ENCODE measurements at regions of chr11 and their contacts with region 1.

Region 1: DNA sequence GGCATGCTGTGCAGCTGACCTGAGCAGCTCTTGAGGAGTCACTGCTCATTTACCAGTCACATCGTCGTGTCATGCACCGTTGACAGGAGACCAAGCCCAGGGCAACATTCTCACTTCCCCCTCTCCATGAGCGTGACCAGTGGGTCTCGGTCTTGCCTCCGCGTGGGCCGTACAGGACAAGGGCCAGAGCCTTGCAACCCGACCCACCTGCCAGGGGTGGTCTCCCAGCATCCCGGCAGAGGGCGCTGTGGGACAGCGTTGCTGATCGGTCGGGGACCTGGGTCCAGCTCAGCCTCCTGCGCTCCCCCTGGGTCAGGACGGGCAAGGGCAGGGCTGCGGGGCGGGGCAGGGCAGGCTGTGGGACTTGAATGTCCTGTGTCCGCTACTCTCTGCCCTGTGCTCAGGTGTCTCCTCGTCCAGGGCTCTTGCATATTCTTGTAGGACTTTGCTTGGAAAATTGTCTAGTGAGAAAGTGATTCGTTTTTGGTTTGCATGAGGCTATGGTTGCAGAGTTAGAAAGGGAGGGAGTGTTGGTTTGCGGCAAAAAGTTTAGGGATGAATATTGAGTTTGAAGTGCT is 16.2 kb downstream of the EIF4G2 start:
- DNase-seq: peak; percentile 72 to 97
- H3K4me3 ChIP-seq: no peak overlapping the region
- H3K4me1 ChIP-seq: peaks cover 12% of the 10 kb centered on the region
- H3K27me3 ChIP-seq: no peaks in the 10 kb centered on the region

Region 2: GRCh38 chr11:9757809-9758636 is 1034.5 kb before region 1 on chr11:
- in situ Hi-C with region 1: no loop called
- DNase-seq: peak; percentile 66 to 94
- H3K4me3 ChIP-seq: peak overlapping the region; percentile 46
- H3K4me1 ChIP-seq: peaks cover 38% of the 10 kb centered on the region
- H3K27me3 ChIP-seq: no peaks in the 10 kb centered on the region

Region 3: GRCh38 chr11:10920205-10920604 is 127.7 kb after region 1 on chr11:
- in situ Hi-C with region 1: loop called (anchors 10 kb)
- DNase-seq: no peak
- H3K4me3 ChIP-seq: no peak overlapping the region
- H3K4me1 ChIP-seq: peaks cover 20% of the 10 kb centered on the region
- H3K27me3 ChIP-seq: no peaks in the 10 kb centered on the region

Region 4: GRCh38 chr11:11022125-11022730 is 229.7 kb after region 1 on chr11:
- in situ Hi-C with region 1: loop called (anchors 5 kb)
- DNase-seq: peak; percentile 41 to 47
- H3K4me3 ChIP-seq: no peak overlapping the region
- H3K4me1 ChIP-seq: peaks cover 8% of the 10 kb centered on the region
- H3K27me3 ChIP-seq: no peaks in the 10 kb centered on the region

Region 5: DNA sequence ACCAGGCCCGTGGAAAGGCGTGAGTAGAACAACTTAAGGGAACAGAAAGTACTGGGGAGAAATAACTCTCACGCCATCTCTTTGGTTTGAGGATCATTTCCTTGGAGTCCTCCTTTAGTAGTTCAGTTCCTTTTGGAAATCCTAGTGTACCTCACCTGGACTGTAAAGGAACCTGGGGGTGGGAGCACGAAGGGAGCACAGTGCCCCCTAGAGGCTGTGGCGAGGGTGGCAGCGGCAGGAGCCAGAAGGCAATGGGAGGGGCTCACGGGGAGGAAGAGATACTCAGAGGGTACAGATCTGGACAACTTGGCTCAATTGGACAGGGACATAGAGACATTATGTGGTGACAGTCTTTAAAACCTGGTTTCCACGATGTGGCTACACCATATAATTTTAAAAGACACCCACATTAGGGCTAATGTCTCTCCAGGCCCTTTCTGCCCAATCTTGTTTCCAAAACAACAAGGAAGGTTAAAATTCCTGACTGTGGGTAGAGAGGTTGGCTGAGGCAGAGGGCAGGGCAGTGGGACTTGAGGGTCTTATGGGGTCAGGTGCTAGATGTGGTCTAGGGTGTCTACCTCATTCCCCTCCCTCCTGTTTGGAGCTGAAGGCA is 473.6 kb after region 1 on chr11:
- in situ Hi-C with region 1: loop called (anchors 25 kb)
- DNase-seq: peak; percentile 28 to 77
- H3K4me3 ChIP-seq: no peak overlapping the region
- H3K4me1 ChIP-seq: no peaks in the 10 kb centered on the region
- H3K27me3 ChIP-seq: no peaks in the 10 kb centered on the region

Region 6: DNA sequence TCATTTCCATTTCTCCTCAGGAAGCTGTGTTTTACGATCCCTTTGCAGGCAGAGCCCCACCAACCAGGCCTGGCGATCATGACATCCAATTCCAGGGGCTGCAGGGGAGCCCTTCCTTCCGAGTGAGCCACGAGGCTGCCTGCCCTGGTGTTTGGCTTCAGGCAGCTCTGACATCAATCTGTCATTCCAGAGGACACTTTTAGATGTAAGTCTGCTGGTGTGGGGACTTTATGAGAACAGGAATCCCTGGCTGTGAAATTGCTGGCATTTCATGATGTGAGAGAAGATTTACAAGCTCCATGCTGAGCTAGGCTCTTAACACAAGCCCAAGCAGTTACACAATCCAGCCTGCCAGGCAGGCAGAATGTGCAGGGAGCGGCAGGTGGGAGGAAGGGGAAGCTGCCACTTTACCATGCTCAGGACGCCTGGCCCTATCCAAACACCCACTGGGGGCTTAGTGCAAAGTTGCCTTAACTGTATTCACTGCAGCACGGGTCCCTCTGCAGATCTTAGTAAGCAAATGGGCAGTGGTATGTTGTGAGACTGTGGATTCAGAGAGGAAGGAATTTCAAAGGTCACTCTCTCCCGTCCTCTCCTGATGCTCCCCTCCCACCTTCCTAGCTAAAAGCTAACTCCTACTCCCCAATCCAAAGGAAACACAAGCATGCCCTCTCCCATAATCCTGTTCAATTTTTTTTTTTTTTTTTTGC is 1274.5 kb after region 1 on chr11:
- in situ Hi-C with region 1: no loop called
- DNase-seq: no peak
- H3K4me3 ChIP-seq: no peak overlapping the region
- H3K4me1 ChIP-seq: no peaks in the 10 kb centered on the region
- H3K27me3 ChIP-seq: no peaks in the 10 kb centered on the region; the same call in 1 of the 2 replicates

Measured in HAP-1 (cell line).